ENCODE measurements at regions of chr12 and their contacts with region 1.

Region 1: DNA sequence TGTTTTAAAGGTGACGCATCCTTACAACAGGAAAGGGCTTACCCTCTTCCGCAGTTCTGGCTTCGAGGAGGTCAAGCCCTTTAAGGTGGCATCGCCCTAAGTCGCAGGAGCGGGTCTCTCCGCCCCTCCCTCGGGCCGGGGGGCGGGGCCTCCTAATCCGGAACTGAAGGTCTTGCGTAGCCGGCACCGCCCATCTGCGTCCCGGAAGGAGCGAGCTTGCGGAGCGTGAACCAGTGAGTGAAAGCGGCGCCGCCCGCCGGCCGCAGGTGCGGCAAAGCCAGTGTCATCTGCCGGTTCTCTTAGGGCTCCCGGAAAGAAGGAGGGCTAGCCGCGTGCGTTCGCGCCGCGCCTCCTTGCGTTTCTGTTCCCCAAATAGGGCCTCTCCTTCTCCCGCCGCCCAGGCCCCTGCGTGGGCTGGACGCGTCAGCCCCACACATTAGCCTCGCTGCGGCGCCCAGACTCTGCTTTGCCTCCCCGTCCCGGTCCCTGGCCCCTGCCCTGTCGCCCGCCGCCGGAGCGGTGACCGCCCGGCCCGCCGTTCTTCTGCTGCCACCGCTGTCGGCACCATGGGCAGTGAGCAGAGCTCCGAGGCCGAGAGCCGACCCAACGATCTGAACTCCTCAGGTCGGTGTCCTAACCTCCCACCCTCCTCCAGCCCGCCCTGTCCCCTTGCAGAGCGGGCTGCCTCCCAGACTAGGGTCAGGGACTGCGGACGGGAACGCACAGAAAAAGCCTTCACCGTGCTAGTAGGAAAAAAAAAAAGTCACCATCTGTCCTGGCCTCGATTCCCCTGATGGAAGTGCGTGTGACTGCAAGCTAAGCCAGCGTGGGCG is at the start of gene BORCS5:
- DNase-seq: peak; percentile 99
- ATAC-seq: peak; percentile 90
- H3K4me3 Mint-ChIP-seq: peak within 1 kb of the TSS; percentile 92
- H3K27ac Mint-ChIP-seq: peak within 1 kb of the TSS; percentile 98
- H3K4me1 Mint-ChIP-seq: peaks cover 38% of the 10 kb centered on the region
- H3K27me3 Mint-ChIP-seq: no peaks in the 10 kb centered on the region
- CTCF ChIP-seq: no peak
- total RNA-seq, gene BORCS5: 19.5 and 22.7 TPM in 2 replicates

Region 2: GRCh38 chr12:10613349-10614055 is 1743.6 kb before region 1 on chr12 and contains the start of gene MAGOHB:
- CTCF ChIA-PET with region 1: no interaction called
- POLR2A ChIA-PET with region 1: no interaction called
- intact Hi-C with region 1: loop called (anchors 2 kb)
- DNase-seq: peak; percentile 99
- ATAC-seq: peak; percentile 96
- H3K4me3 Mint-ChIP-seq: peak within 1 kb of the TSS; percentile 100
- H3K27ac Mint-ChIP-seq: peak within 1 kb of the TSS; percentile 100
- H3K4me1 Mint-ChIP-seq: peaks cover 29% of the 10 kb centered on the region
- H3K27me3 Mint-ChIP-seq: peaks cover 6% of the 10 kb centered on the region
- CTCF ChIP-seq: no peak
- total RNA-seq, gene MAGOHB: 25.0 and 28.8 TPM in 2 replicates

Region 3: GRCh38 chr12:11836282-11837151 is 520.6 kb before region 1 on chr12:
- CTCF ChIA-PET with region 1: no interaction called
- POLR2A ChIA-PET with region 1: no interaction called
- intact Hi-C with region 1: loop called (anchors 2 kb)
- DNase-seq: peak; percentile 73
- ATAC-seq: peak; percentile 94
- H3K4me3 Mint-ChIP-seq: peak overlapping the region; percentile 73
- H3K27ac Mint-ChIP-seq: peak overlapping the region; percentile 95
- H3K4me1 Mint-ChIP-seq: peaks cover 81% of the 10 kb centered on the region
- H3K27me3 Mint-ChIP-seq: no peaks in the 10 kb centered on the region
- CTCF ChIP-seq: no peak

Region 4: DNA sequence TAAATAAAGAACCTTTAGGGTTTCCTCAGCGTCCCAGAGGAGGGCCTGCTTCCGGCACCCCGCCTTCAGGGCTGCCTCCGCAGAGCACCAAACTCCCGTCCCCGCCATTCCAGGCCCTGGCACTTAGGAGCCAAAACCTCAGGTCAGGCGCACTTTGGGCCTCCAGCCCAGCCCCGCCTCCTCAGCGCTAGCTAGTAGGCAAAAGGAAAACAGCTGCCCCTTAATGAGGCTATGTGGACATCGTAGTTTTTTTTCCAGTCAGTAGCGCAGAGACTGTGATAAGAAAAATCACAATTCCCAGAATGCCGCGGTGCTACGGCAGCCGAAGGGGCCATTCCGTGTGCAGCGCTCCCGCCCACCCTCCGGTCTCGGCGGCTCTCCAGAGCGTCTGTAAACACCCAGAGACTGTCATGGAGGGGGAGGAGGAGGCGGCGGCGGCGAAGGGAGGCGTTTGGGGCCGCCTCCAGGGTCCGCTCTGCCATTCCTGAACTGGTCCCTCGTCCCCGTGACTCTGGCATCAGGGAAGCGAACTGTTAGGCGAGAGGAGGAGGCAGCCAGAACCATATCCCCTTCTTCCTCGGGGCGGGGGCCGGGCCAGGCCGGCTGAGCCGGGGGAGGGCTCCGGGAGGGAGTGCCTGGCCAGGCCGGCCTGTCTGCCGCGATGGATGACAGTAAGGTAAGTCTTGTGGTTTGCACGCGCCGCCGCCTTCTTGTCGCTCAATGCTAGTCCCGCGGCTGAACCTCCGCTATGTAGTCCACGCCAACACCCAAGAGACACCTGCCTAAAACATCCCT is 254.6 kb after region 1 on chr12 and contains the start of gene CREBL2:
- CTCF ChIA-PET with region 1: no interaction called
- POLR2A ChIA-PET with region 1: interaction called, 9 read pairs
- intact Hi-C with region 1: loop called (anchors 1 kb)
- DNase-seq: peak; percentile 75
- ATAC-seq: peak; percentile 91
- H3K4me3 Mint-ChIP-seq: peak within 1 kb of the TSS; percentile 94
- H3K27ac Mint-ChIP-seq: peak within 1 kb of the TSS; percentile 97
- H3K4me1 Mint-ChIP-seq: peaks cover 32% of the 10 kb centered on the region
- H3K27me3 Mint-ChIP-seq: no peaks in the 10 kb centered on the region
- CTCF ChIP-seq: no peak
- total RNA-seq, gene CREBL2: 10.1 and 10.8 TPM in 2 replicates

Region 5: GRCh38 chr12:12724661-12725545 is 367.8 kb after region 1 on chr12:
- CTCF ChIA-PET with region 1: no interaction called
- POLR2A ChIA-PET with region 1: interaction called, 339 read pairs
- intact Hi-C with region 1: loop called (anchors 1 kb)
- DNase-seq: peak; percentile 81
- ATAC-seq: peak; percentile 69
- H3K4me3 Mint-ChIP-seq: peak overlapping the region; percentile 97
- H3K27ac Mint-ChIP-seq: peak overlapping the region; percentile 97
- H3K4me1 Mint-ChIP-seq: peaks cover 50% of the 10 kb centered on the region
- H3K27me3 Mint-ChIP-seq: no peaks in the 10 kb centered on the region
- CTCF ChIP-seq: no peak

Region 6: GRCh38 chr12:12803186-12803585 is 446.1 kb after region 1 on chr12:
- CTCF ChIA-PET with region 1: no interaction called
- POLR2A ChIA-PET with region 1: interaction called, 8 read pairs
- intact Hi-C with region 1: loop called (anchors 2 kb)
- DNase-seq: no peak
- ATAC-seq: peak; percentile 70
- H3K4me3 Mint-ChIP-seq: peak overlapping the region; percentile 12
- H3K27ac Mint-ChIP-seq: peak overlapping the region; percentile 6
- H3K4me1 Mint-ChIP-seq: peaks cover 65% of the 10 kb centered on the region
- H3K27me3 Mint-ChIP-seq: no peaks in the 10 kb centered on the region
- CTCF ChIP-seq: no peak